ENCODE measurements at regions of chr1 and their contacts with region 1.

Region 1: DNA sequence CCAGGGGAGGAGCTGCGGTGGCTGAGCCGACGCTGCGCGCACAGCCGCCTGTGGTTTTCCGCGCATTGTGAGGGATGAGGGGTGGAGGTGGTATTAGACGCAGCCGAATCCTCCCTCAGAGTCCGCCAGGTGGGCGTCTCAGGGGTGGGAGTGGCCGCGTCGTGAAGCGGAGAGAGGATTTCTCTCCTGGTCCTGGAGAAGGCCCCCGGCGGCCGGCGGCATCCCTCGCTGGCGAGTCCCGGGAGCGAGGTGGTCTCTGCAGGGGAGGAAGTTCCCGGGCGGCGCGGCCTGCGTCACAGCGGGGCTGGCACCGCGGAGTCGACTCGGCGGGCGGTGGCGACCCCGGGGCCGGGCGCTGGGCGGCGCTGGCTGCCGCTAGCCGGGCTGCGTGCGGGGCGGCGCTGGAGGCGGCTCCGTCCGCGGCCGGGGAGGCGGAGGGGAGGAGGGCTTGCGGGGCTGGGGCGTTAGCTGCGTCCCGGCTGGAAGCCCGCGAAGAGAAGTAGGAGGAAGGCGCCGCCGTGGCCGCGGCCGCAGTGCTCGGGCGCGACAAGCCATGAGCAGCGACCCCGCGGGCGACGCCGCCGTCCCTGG is at the start of gene LRRC8C:
- DNase-seq: peak; percentile 74
- ATAC-seq: peak; percentile 68
- H3K4me3 ChIP-seq: peak within 1 kb of the TSS; percentile 77
- H3K27ac ChIP-seq: no peak within 1 kb of the TSS
- H3K4me1 ChIP-seq: peaks cover 32% of the 10 kb centered on the region
- H3K27me3 ChIP-seq: no peaks in the 10 kb centered on the region
- CTCF ChIP-seq: no peak; the same call in 1 of the 2 replicates
- total RNA-seq, gene LRRC8C: 3.4 and 4.3 TPM in 2 replicates

Region 2: DNA sequence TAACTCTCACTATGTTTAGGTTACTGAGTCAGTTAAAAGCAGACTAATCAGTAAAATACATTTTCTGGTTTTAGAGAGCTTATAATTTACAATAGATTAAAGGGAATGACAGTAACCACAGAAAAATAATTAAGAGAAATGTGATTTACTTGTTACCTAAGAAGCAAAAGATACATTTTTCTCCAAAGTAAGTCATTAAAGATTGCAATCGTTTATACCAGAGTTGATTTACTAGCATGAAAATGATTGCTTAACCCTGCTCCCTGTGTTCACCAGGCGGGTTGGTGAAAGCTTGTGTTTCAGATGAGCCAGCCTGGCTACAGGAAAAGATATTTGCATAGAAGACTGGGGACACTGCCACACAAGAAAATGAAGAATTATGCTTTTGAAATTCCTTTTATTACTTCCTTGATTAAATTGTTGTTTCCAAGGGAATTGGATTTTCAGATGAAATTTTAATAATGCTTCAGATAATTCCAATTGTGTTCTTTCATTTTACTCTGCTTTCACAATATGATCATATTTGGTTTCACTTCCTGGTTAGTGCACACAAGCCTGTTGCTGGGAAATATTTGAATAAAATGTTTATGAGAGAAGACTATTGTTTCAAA is 80.2 kb before region 1 on chr1:
- CTCF ChIA-PET with region 1: no interaction called
- POLR2A ChIA-PET with region 1: no interaction called
- intact Hi-C with region 1: no loop called
- DNase-seq: no peak
- ATAC-seq: peak; percentile 64; the same call in 1 of the 2 replicates
- H3K4me3 ChIP-seq: no peak overlapping the region
- H3K27ac ChIP-seq: peak overlapping the region; percentile 7
- H3K4me1 ChIP-seq: peaks cover 18% of the 10 kb centered on the region
- H3K27me3 ChIP-seq: no peaks in the 10 kb centered on the region
- CTCF ChIP-seq: no peak

Region 3: DNA sequence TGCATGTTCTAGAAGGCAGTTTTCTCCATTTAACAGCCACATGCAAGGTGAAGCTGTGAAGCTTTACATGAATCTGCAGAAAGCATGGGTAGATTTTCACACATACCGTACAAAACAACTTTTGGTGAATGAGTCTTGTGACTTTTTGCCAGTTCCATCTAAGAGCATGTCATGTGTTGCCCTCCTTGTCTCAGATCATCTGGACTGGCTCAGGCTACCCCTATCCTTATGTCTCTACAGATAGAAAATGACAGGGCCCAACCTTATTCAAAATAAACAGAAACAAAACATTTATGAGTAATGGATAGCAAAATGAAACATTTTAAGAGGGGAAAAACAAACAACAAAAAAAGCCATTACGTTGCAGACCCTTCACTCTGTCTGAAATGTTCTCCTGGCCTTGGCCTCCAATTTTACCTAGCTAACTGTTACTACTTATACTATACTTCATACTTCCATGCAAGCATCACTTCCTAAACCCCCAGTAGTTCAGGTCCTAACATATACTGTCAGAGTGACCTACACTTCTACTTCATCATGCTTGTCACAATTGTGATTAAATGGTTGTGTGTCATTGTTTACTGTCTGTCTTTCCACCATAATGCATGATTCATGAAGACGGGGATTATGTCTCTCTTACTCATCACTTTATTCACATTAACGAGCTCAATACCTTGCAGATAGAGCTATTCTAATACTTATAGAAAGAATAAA is 39.2 kb after region 1 on chr1:
- CTCF ChIA-PET with region 1: interaction called, 3 read pairs
- POLR2A ChIA-PET with region 1: no interaction called
- intact Hi-C with region 1: loop called (anchors 2 kb)
- DNase-seq: peak; percentile 90
- ATAC-seq: peak; percentile 98
- H3K4me3 ChIP-seq: no peak overlapping the region
- H3K27ac ChIP-seq: peak overlapping the region; percentile 63
- H3K4me1 ChIP-seq: peaks cover 23% of the 10 kb centered on the region
- H3K27me3 ChIP-seq: no peaks in the 10 kb centered on the region
- CTCF ChIP-seq: no peak

Region 4: DNA sequence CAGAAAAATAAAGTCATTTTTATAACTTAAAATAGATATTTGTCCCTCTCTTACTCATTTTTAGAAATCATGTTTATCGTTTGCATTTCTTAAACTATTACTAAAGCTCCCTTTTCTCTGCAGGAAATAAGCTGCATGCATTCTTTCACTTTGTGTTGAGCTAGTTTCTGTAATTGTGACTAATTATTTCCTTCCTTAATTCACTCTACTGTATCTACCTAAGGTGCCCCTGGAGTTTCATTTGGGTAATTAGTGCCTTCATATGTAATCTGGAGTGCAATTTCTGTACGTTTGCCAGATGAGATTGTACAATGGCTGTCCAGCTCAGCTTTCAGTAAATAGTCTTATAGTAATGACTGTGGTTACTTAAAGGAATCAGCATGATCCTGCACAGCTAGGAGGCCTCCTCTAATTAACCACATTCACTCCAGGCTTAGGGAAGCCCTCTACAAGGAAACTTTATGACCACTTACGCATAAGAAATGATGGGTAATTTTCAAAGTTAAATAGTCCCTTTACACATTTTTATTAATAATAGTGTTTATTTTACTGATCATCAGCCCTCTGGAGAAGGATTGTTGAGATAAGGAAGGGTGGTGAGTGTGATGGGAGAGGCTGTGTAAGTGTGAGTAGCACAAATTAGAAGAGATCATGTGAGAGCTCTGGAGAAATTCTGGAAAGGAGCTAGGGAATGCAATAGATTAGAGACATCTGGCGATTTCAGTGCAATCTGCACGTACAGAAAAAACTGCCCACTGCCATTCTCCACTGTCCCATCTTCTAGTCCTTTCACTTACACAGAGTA is 87.0 kb after region 1 on chr1:
- CTCF ChIA-PET with region 1: no interaction called
- POLR2A ChIA-PET with region 1: interaction called, 3 read pairs
- intact Hi-C with region 1: loop called (anchors 2 kb)
- DNase-seq: no peak
- ATAC-seq: peak; percentile 63
- H3K4me3 ChIP-seq: peak overlapping the region; percentile 29; the same call in 1 of the 2 replicates
- H3K27ac ChIP-seq: peak overlapping the region; percentile 59
- H3K4me1 ChIP-seq: peaks cover 40% of the 10 kb centered on the region
- H3K27me3 ChIP-seq: no peaks in the 10 kb centered on the region
- CTCF ChIP-seq: no peak

Region 5: GRCh38 chr1:89994805-89995597 is 362.2 kb after region 1 on chr1 and contains the start of gene ZNF326:
- CTCF ChIA-PET with region 1: no interaction called
- POLR2A ChIA-PET with region 1: no interaction called
- intact Hi-C with region 1: loop called (anchors 5 kb)
- DNase-seq: peak; percentile 97
- ATAC-seq: peak; percentile 94
- H3K4me3 ChIP-seq: peak within 1 kb of the TSS; percentile 73
- H3K27ac ChIP-seq: peak within 1 kb of the TSS; percentile 72
- H3K4me1 ChIP-seq: peaks cover 56% of the 10 kb centered on the region
- H3K27me3 ChIP-seq: no peaks in the 10 kb centered on the region
- CTCF ChIP-seq: peak; percentile 21; the same call in 1 of the 2 replicates
- total RNA-seq, gene ZNF326: 7.2 and 12.7 TPM in 2 replicates